ENCODE measurements at regions of chr5 and their contacts with region 1.

Region 1: DNA sequence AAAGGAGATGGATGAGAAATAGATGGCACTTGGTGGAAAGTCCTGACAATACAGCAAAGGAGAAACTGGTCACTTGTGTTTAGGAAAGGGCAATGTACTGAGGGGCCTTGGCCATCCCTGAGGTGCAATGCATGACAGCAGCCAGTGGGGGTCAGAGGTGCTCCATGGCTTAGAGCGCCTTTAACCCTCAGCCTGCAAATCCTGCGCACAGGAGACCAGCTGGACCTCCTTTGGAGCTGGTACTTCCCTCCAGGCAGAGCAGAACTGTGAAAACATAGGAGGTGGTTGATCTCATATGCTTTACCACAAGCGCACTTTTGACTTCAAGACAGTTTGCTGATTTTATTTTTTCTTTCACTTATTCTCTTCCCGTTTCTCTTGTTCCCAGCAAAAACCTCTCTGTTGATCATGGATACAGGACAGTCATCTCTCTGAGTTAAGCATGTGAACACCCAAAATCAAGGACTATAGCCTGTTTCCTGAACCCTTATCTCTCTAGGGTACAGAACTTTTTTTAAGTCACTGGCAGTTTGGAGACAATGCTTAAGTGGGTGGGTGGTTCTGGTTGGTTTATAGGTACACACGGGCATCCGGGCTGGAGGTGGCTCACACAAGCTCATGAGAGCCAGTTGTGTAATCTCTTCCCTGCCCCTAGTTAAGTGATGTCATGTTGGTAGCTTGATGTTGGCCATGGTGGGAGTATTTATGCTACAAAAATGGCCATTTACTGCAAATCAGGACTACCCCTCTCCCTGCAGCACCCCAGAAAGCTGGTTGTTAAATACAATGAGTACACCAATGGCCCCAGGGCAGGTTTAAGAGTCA is 37.6 kb upstream of the ANKRD55 start:
- DNase-seq: peak; percentile 93 to 95 (median 93)
- H3K4me3 ChIP-seq: no peak overlapping the region
- H3K27ac ChIP-seq: peak overlapping the region in 1 of 2 donors; percentile 26
- H3K4me1 ChIP-seq: peaks cover 0 to 6% (median 5%) of the 10 kb centered on the region in 3 donors
- H3K27me3 ChIP-seq: no peaks in the 10 kb centered on the region
- CTCF ChIP-seq: peak; percentile 99

Region 2: DNA sequence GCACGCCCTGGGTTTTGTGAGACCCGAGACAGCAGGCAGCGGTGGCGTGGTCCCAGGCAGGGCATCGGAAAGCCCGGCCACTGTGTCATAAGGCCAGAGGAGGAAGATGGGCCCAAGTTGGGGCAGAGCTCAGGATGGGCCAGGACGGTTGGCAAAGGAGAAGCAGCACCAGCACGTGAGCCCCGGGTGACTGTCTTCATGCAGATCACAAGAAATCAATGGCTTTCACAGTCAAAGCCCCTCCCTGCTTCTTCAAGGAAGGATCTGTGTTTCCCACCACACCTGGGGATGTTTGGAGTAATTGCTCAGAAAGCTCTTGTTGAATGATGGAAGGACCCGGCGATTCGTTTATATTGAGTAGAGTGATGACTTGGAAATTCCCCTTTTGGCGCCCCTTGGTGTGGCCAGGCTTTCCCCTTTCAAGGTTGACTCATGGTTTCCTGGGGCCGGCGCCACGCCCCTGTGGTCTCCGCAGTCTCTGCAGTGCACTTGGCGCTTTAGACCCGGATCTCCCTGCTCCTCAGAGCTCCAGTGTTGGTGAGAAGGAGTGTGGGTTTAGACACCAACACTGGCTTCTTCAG is 367.6 kb before region 1 on chr5:
- intact Hi-C with region 1: no loop called
- DNase-seq: no peak
- H3K4me3 ChIP-seq: no peak overlapping the region
- H3K27ac ChIP-seq: no peak overlapping the region
- H3K4me1 ChIP-seq: no peaks in the 10 kb centered on the region
- H3K27me3 ChIP-seq: no peaks in the 10 kb centered on the region
- CTCF ChIP-seq: no peak

Region 3: DNA sequence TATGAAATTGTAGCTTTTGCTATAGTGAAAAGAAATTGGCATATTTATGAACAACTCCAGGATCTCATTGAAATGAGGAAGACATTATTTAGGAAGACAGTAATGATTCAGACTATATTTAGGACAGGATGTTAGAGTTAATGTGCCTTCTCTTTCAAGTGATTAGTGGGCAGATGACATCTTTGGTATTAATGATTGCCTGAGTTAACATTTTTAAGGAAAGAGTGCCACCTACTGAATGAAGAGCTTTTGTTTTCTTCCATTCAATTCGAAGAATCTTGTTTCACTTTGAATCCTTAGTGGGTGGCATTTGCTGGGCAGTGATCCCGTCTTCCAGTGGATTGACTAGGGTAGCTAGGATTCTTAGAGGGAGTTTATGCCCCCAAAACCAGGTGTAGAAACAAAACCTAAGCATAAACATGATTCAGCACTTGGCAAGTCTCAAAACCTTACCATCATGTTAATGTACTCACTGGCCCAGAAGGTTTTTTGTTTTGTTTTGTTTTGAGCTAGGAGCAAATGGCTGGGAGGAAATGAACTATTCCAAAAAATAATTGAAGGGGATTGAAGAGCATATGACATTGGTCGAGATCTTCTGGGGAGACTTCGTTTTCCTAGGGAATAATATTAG is 567.7 kb after region 1 on chr5:
- intact Hi-C with region 1: loop called (anchors 5 kb)
- DNase-seq: peak in 2 of 5 donors; percentile 82 to 84
- H3K4me3 ChIP-seq: peak overlapping the region in 2 of 3 donors; percentile 11 to 15
- H3K27ac ChIP-seq: peak overlapping the region in 1 of 2 donors; percentile 5
- H3K4me1 ChIP-seq: peaks cover 8 to 24% (median 23%) of the 10 kb centered on the region in 3 donors
- H3K27me3 ChIP-seq: no peaks in the 10 kb centered on the region
- CTCF ChIP-seq: peak; percentile 56

Measured in kidney (tissue), 22 donors.